Naive thymus-derived CD8-positive, alpha-beta T cell (primary cell): ENCODE measurements at regions of chr18 and their contacts with region 1.

Region 1: GRCh38 chr18:79523736-79524180 is 128.0 kb downstream of the NFATC1 start:
- DNase-seq: peak; percentile 58 to 92 (median 82)
- ATAC-seq: peak; percentile 57 to 78
- H3K4me3 Mint-ChIP-seq: peak overlapping the region; percentile 79 to 93 (median 89)
- H3K27ac Mint-ChIP-seq: peak overlapping the region; percentile 96 to 100 (median 98)
- H3K4me1 Mint-ChIP-seq: peaks cover 38 to 68% (median 56%) of the 10 kb centered on the region in 4 donors
- H3K27me3 Mint-ChIP-seq: no peaks in the 10 kb centered on the region

Region 2: DNA sequence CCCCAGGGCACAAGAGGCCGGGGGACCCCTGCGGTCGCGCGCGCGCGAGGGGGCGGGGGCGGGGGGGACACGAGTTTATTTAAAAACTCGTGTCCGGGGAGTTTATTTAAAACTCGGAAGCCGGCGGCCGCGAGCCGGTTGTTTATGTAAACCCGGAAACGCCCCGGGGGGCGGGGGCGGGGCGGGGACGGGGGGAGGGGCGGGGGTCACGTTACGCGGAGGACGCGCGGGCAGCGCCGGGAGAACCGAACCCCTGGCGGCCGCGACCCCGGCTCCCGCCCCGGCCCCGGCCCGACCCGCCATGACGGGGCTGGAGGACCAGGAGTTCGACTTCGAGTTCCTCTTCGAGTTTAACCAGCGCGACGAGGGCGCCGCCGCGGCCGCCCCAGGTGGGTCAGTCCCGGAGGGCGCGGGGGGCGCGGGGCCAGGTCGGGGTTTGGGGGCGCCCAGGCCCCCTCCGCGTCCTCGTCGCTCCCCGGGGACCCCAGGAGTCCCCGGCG is 123.6 kb before region 1 on chr18:
- POLR2A ChIA-PET with region 1: interaction called, 21 read pairs
- DNase-seq: peak in 8 of 10 donors; percentile 42 to 82 (median 57)
- ATAC-seq: peak; percentile 24 to 25
- H3K4me3 Mint-ChIP-seq: peak overlapping the region in 2 of 10 donors; percentile 69 to 83
- H3K27ac Mint-ChIP-seq: no peak overlapping the region
- H3K4me1 Mint-ChIP-seq: peaks cover 28 to 60% (median 51%) of the 10 kb centered on the region in 4 donors
- H3K27me3 Mint-ChIP-seq: no peaks in the 10 kb centered on the region

Region 3: GRCh38 chr18:79405781-79406575 is 117.8 kb before region 1 on chr18:
- POLR2A ChIA-PET with region 1: interaction called, 20 read pairs
- DNase-seq: peak; percentile 72 to 97 (median 92)
- ATAC-seq: peak; percentile 78 to 91
- H3K4me3 Mint-ChIP-seq: peak overlapping the region; percentile 71 to 93 (median 82)
- H3K27ac Mint-ChIP-seq: peak overlapping the region; percentile 94 to 99 (median 98)
- H3K4me1 Mint-ChIP-seq: peaks cover 31 to 65% (median 64%) of the 10 kb centered on the region in 4 donors
- H3K27me3 Mint-ChIP-seq: no peaks in the 10 kb centered on the region

Region 4: DNA sequence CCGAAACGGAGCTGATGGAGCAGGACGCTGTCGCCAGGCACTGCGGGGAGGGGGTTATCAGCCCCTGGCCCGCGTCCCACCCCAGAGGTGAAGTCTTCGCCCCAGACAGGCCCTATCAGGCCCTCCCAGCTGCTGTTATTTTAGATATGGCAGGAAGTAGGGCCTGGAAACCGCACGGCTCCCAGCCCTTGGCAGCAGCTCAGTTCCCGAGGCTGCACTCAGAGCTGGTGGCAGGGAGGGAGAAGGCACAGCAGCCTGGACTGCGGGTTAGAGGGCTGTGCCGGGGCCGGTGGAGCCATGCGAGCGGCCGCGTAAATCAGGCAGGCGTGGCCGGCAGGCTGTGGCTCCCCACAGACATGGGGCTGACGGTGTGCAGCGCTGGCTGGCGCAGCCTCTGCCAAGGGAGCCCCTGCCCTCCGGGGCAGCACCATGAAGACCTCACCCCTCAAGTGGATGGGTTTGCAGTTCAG is 16.6 kb before region 1 on chr18:
- POLR2A ChIA-PET with region 1: interaction called, 19 read pairs
- DNase-seq: peak in 6 of 10 donors; percentile 11 to 61 (median 42)
- ATAC-seq: peak; percentile 69 to 70
- H3K4me3 Mint-ChIP-seq: peak overlapping the region; percentile 66 to 87 (median 77)
- H3K27ac Mint-ChIP-seq: peak overlapping the region; percentile 85 to 96 (median 92)
- H3K4me1 Mint-ChIP-seq: peaks cover 25 to 61% (median 52%) of the 10 kb centered on the region in 4 donors
- H3K27me3 Mint-ChIP-seq: no peaks in the 10 kb centered on the region

Region 5: DNA sequence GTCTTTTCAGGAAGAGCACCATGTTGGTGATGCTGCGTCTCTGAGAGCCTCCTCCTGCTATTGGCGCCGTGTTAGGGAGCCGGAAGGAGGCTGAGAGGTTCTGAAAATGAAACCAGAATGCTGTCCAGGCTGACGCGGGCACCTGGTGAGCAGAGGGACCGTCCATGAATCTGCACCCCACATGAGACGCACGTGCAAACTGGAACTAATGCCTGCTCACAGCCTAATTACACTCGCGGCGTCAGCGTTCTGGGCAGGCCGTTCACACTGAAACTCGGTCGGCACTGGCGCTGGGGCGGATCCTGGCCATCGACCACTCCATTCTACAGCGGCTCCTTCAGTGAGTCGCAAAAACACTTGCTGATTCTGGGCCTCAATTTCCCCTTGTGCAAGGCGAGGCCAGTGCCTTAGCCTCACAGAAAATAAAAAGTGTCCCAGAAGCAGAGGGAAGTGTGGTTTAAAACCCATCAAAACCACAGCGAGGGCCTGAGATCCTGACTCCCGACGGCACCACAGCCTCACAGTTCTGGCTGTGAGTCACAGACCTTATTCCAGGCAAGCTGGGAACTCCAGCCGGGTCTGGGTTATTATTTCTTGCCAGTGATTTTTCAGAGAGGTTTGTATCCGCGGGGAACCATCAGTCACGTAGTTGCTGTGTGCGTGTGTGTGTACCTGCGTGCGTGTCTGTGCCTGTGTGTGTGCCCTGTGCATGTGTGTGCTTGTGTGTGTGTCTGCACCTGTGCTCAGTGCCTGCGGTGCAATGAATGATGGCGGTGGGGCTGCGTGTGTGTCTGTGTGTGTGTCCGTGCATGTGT is 106.7 kb after region 1 on chr18:
- POLR2A ChIA-PET with region 1: no interaction called
- DNase-seq: peak in 1 of 10 donors; percentile 49
- ATAC-seq: no peak
- H3K4me3 Mint-ChIP-seq: no peak overlapping the region
- H3K27ac Mint-ChIP-seq: no peak overlapping the region
- H3K4me1 Mint-ChIP-seq: peaks cover 0 to 21% (median 6%) of the 10 kb centered on the region in 4 donors
- H3K27me3 Mint-ChIP-seq: peaks cover 0 to 32% (median 3%) of the 10 kb centered on the region in 5 donors